Caco-2 (cell line): ENCODE measurements at regions of chr2 and their contacts with region 1.

Region 1: DNA sequence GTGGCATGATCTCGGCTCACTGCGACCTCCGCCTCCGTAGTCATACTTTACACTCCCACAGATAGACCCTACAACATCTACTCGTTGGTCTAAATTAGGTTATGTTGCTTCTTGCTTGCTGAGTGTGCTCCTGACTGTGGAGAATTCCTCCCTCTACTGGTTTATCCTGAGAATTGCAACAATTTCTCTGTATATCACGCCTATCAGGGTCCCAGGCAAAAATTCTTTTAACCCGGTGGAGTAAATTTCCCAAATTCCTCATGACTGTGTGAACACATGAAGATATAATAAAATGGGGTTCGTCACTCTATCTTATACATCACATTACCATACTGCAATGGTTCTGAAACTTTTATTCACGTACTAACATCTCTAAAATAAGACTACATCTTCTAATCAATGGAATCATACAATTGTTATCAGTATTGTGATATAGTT is 156.7 kb downstream of the EVA1A start:
- DNase-seq: peak in 1 of 2 experiments; percentile 51
- H3K4me3 ChIP-seq: no peak overlapping the region
- H3K4me3 Mint-ChIP-seq: no peak overlapping the region
- H3K27ac Mint-ChIP-seq: no peak overlapping the region
- H3K4me1 ChIP-seq: no peaks in the 10 kb centered on the region
- H3K4me1 Mint-ChIP-seq: peaks cover 6% of the 10 kb centered on the region
- H3K27me3 ChIP-seq: no peaks in the 10 kb centered on the region; the same call in 1 of the 2 replicates
- H3K27me3 Mint-ChIP-seq: peaks cover 16% of the 10 kb centered on the region
- CTCF ChIP-seq: peak; percentile 72 to 82

Region 2: GRCh38 chr2:74690571-74690970 is 713.4 kb before region 1 on chr2:
- CTCF ChIA-PET with region 1: no interaction called
- POLR2A ChIA-PET with region 1: no interaction called
- intact Hi-C with region 1: loop called (anchors 5 kb)
- DNase-seq: peak in 1 of 2 experiments; percentile 66
- H3K4me3 ChIP-seq: no peak overlapping the region
- H3K4me3 Mint-ChIP-seq: no peak overlapping the region
- H3K27ac Mint-ChIP-seq: no peak overlapping the region
- H3K4me1 ChIP-seq: no peaks in the 10 kb centered on the region
- H3K4me1 Mint-ChIP-seq: no peaks in the 10 kb centered on the region
- H3K27me3 ChIP-seq: no peaks in the 10 kb centered on the region
- H3K27me3 Mint-ChIP-seq: no peaks in the 10 kb centered on the region
- CTCF ChIP-seq: peak; percentile 77 to 81

Region 3: GRCh38 chr2:75053484-75054112 is 350.4 kb before region 1 on chr2:
- CTCF ChIA-PET with region 1: no interaction called
- POLR2A ChIA-PET with region 1: no interaction called
- intact Hi-C with region 1: loop called (anchors 1 kb)
- DNase-seq: peak; percentile 55 to 60
- H3K4me3 ChIP-seq: no peak overlapping the region
- H3K4me3 Mint-ChIP-seq: no peak overlapping the region
- H3K27ac Mint-ChIP-seq: no peak overlapping the region
- H3K4me1 ChIP-seq: no peaks in the 10 kb centered on the region
- H3K4me1 Mint-ChIP-seq: no peaks in the 10 kb centered on the region
- H3K27me3 ChIP-seq: no peaks in the 10 kb centered on the region
- H3K27me3 Mint-ChIP-seq: no peaks in the 10 kb centered on the region
- CTCF ChIP-seq: peak; percentile 73 to 89

Region 4: DNA sequence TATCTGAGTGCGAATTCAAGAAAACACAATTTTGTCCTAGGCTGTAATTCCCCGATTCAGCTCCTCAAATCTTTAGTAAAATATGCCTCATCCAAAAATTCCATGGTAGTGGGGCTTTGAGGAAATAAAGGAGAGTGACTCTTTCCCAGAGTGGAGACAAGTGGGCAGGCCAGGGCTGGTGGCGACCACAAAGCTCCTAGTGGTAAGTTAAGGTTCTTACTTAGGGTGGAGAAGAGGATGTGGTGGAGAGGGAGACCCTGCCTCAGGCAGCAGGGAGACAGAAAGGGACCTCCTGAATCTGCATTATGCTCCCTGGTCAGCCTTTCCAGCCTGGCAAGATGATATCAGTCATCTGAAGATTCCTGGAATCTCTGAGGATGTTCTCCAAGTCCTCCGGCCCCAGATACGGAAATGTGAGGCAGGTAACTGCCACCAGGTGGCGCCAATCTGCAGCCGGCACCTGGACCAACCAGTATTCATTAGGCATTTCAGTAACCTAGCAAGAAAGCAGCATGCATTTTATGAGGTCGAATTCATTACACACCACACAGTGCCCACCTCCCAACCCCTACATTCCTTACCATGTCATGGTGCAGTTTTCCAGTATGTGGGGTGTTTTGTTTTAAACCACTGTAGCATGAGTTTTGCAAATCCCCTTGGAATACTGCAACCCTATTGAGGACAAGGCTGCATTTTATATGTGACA is 339.2 kb before region 1 on chr2:
- CTCF ChIA-PET with region 1: no interaction called
- POLR2A ChIA-PET with region 1: no interaction called
- intact Hi-C with region 1: loop called (anchors 1 kb)
- DNase-seq: peak; percentile 59 to 79
- H3K4me3 ChIP-seq: no peak overlapping the region
- H3K4me3 Mint-ChIP-seq: no peak overlapping the region
- H3K27ac Mint-ChIP-seq: no peak overlapping the region
- H3K4me1 ChIP-seq: no peaks in the 10 kb centered on the region
- H3K4me1 Mint-ChIP-seq: peaks cover 5% of the 10 kb centered on the region
- H3K27me3 ChIP-seq: no peaks in the 10 kb centered on the region
- H3K27me3 Mint-ChIP-seq: no peaks in the 10 kb centered on the region
- CTCF ChIP-seq: peak; percentile 91 to 92

Region 5: GRCh38 chr2:75157430-75157829 is 246.6 kb before region 1 on chr2:
- CTCF ChIA-PET with region 1: no interaction called
- POLR2A ChIA-PET with region 1: no interaction called
- intact Hi-C with region 1: loop called (anchors 1 kb)
- DNase-seq: no peak
- H3K4me3 ChIP-seq: no peak overlapping the region
- H3K4me3 Mint-ChIP-seq: no peak overlapping the region
- H3K27ac Mint-ChIP-seq: no peak overlapping the region
- H3K4me1 ChIP-seq: peaks cover 20% of the 10 kb centered on the region
- H3K4me1 Mint-ChIP-seq: peaks cover 8% of the 10 kb centered on the region
- H3K27me3 ChIP-seq: no peaks in the 10 kb centered on the region
- H3K27me3 Mint-ChIP-seq: peaks cover 6% of the 10 kb centered on the region
- CTCF ChIP-seq: peak in 1 of 2 experiments; percentile 5

Region 6: DNA sequence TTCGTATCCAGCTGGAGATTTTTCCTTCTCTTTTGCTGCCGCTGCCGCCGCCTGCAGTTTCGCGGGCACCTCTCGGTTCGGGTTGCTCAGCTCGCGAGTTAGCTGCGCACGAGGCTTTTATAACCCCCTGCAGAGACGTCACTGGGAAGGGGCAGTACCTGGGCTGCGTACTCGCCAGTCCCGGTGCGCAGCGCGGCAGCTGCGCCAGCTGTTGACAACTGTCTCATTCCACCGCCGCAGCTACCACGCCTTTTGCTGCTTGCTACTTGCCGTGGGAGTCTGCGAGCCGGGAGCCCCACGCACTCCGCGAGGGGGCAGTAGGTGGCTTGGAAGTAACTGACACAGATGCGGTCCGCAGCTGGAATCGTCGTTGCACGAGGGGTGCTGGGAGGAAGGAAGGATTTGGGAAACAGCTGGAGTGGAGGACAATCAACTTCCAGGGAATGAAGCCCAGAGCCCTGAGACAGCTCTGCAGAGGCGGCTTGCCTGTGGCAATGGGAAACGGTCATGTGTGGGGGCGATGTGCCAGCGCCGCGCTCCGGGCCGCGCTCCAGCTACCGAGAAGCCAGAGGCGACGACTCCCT is 204.5 kb before region 1 on chr2 and contains the start of gene TACR1:
- CTCF ChIA-PET with region 1: no interaction called
- POLR2A ChIA-PET with region 1: no interaction called
- intact Hi-C with region 1: loop called (anchors 1 kb)
- DNase-seq: peak; percentile 76 to 78
- H3K4me3 ChIP-seq: peak within 1 kb of the TSS; percentile 21
- H3K4me3 Mint-ChIP-seq: peak within 1 kb of the TSS; percentile 75
- H3K27ac Mint-ChIP-seq: no peak within 1 kb of the TSS
- H3K4me1 ChIP-seq: peaks cover 15% of the 10 kb centered on the region; the same call in 1 of the 2 replicates
- H3K4me1 Mint-ChIP-seq: peaks cover 6% of the 10 kb centered on the region
- H3K27me3 ChIP-seq: peaks cover 9% of the 10 kb centered on the region
- H3K27me3 Mint-ChIP-seq: peaks cover 18% of the 10 kb centered on the region
- CTCF ChIP-seq: peak; percentile 49 to 69
- total RNA-seq, gene TACR1: 0.07 TPM in 2 replicates

Region 7: DNA sequence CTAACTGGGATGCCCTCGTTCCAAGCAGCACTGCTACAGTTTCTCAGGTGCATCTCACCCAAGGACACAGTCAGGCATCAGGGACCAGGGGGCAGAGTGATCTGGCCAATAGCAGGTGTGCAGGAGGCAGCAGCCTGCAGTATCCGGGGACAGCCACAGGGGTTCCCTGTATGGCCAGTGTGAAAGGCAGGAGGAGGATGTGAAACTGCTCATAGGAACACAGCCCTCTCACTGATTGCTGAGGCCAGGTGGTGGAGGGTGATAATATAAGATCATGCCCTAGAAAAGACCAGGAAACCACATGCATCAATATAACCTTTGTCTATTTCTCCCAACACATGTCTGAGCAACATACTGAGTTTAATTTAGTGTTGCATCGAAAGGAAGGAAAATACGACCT is 92.0 kb before region 1 on chr2:
- CTCF ChIA-PET with region 1: no interaction called
- POLR2A ChIA-PET with region 1: no interaction called
- intact Hi-C with region 1: loop called (anchors 1 kb)
- DNase-seq: peak; percentile 25 to 47
- H3K4me3 ChIP-seq: no peak overlapping the region
- H3K4me3 Mint-ChIP-seq: no peak overlapping the region
- H3K27ac Mint-ChIP-seq: no peak overlapping the region
- H3K4me1 ChIP-seq: no peaks in the 10 kb centered on the region
- H3K4me1 Mint-ChIP-seq: peaks cover 7% of the 10 kb centered on the region
- H3K27me3 ChIP-seq: no peaks in the 10 kb centered on the region; the same call in none of the 2 replicates
- H3K27me3 Mint-ChIP-seq: peaks cover 14% of the 10 kb centered on the region
- CTCF ChIP-seq: peak in 1 of 2 experiments; percentile 4